Dendritic cell treated with granulocyte-macrophage colony-stimulating factor and Interleukin-4, amounts not matched to agents 40 ng/mL and 50 ng/mL, for 4 days (primary cell): ENCODE measurements at regions of chr3 and their contacts with region 1.

Region 1: GRCh38 chr3:111539351-111540331 is 2.4 kb upstream of the CD96 start:
- H3K4me3 Mint-ChIP-seq: no peak overlapping the region
- H3K27ac Mint-ChIP-seq: no peak overlapping the region
- H3K4me1 Mint-ChIP-seq: peaks cover 10% of the 10 kb centered on the region
- H3K27me3 Mint-ChIP-seq: no peaks in the 10 kb centered on the region

Region 2: DNA sequence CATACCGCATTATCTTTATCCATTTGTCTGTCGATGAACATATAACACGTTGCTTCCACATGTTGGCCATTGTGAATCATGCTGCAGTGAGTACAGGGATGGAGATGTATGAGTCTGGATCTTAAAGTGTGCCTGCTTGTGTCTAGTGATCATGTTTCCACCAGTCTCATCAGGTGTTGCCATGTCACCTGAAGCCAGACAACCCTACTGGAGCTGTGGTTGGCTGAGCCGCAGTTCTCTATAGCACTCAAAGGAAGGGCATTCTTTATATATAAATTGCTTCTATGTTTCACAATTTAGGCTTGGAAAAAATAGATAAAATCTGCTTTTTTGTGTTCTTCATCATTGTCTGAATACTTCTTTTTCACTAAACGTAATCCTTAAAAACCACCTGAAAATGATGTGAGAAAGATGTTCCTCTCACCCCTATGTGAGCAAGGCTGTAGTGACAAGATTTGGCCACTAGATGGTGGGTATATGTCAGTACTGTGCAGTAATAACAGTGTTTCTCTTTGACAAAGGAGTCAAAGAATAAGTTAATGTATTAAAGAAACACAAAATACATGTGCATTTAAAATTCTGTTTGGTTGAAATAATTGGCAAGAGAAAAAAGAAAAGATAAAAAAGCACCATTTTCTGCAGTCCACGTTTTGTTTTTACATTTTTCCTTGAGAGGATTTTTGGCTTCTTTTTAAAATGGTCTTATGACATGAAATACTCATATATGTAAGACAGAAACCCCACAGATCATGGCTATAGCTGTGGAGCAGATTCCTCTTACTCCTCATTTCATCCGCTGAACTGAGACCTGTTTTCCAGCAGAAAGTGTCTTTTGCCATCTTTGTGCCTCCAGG is 1807.8 kb before region 1 on chr3:
- intact Hi-C with region 1: loop called (anchors 5 kb)
- H3K4me3 Mint-ChIP-seq: no peak overlapping the region
- H3K27ac Mint-ChIP-seq: no peak overlapping the region
- H3K4me1 Mint-ChIP-seq: no peaks in the 10 kb centered on the region
- H3K27me3 Mint-ChIP-seq: no peaks in the 10 kb centered on the region